PC-9 (cell line): ENCODE measurements at regions of chr21 and their contacts with region 1.

Region 1: DNA sequence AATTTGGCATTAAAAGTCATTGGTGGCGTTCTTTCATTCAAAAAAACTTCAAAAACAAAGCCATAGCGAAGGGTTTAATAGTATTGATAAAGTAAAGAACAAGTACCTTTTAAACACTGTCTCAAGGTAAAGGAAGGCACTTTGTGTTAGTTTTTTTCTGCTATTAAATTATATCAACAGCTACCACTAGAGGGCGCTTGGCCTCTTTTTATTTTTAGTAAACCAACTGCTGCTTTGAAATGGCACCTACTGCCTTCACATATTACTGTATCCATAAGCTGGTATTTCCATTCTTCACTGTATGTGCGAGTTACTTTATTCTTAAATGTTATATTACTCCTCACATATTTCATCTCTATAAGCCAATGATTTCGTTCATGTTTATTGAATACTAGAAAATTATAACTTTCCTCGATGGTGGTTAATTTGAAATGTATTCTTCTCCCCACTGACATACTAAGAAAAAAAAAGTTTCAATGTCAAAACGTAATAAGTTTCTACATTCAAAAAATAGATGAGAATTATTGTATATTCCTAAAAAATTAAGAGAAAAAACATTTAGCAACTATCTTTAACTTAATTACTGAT is 125.7 kb upstream of the CXADR start:
- DNase-seq: peak; percentile 17 to 47
- H3K4me3 ChIP-seq: no peak overlapping the region
- H3K27ac ChIP-seq: no peak overlapping the region
- H3K4me1 ChIP-seq: peaks cover 16% of the 10 kb centered on the region
- H3K27me3 ChIP-seq: no peaks in the 10 kb centered on the region
- CTCF ChIP-seq: peak; percentile 87

Region 2: GRCh38 chr21:16454399-16454798 is 932.7 kb before region 1 on chr21:
- CTCF ChIA-PET with region 1: no interaction called
- POLR2A ChIA-PET with region 1: no interaction called
- intact Hi-C with region 1: loop called (anchors 5 kb)
- DNase-seq: no peak
- H3K4me3 ChIP-seq: no peak overlapping the region
- H3K27ac ChIP-seq: no peak overlapping the region
- H3K4me1 ChIP-seq: no peaks in the 10 kb centered on the region
- H3K27me3 ChIP-seq: no peaks in the 10 kb centered on the region
- CTCF ChIP-seq: peak; percentile 52

Region 3: GRCh38 chr21:17461582-17461981 is 74.5 kb after region 1 on chr21:
- CTCF ChIA-PET with region 1: interaction called, 11 read pairs
- POLR2A ChIA-PET with region 1: no interaction called
- intact Hi-C with region 1: no loop called
- DNase-seq: no peak
- H3K4me3 ChIP-seq: no peak overlapping the region
- H3K27ac ChIP-seq: no peak overlapping the region
- H3K4me1 ChIP-seq: 0 out of 2 replicates have a peak, but pooled peaks cover 8% of the 10 kb centered on the region
- H3K27me3 ChIP-seq: no peaks in the 10 kb centered on the region
- CTCF ChIP-seq: no peak

Region 4: DNA sequence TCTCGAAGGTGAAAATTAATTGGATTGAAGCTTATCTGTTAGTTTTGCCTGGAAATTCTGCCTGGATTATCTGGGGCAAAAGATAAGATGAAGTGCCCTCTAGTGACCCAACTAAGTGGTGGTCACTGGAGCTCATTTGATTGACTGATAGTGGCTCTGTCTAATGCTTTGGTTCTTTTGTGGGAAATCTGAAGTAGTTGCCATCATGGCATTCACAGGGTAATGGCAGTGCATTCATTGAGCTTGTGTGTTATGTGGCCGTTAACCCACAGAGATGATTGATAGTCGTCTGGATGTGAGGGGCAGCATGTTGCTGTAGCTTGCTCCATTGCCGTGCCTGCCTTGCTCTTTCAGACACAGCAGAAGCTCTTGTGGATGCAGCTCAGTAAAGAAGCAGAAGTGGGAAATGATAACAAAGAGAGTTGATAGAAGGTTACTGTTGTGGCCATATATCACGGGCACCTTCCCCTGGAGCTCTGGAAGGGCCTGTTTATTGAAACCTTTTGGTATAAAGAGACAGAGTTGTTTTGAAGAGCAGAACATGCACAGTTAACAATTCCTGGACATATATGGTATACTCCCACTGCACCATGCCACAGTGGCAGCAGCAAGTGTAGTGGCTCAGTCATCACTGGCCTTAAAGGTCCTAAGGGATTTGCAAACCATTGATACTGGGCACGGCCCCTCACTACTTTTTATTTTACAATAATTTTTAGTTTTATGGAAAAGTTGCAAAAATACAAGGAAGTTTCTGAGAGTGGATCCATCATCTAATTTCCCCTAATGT is 167.7 kb after region 1 on chr21:
- CTCF ChIA-PET with region 1: interaction called, 16 read pairs
- POLR2A ChIA-PET with region 1: no interaction called
- intact Hi-C with region 1: loop called (anchors 1 kb)
- DNase-seq: no peak
- H3K4me3 ChIP-seq: no peak overlapping the region
- H3K27ac ChIP-seq: no peak overlapping the region
- H3K4me1 ChIP-seq: 0 out of 2 replicates have a peak, but pooled peaks cover 6% of the 10 kb centered on the region
- H3K27me3 ChIP-seq: no peaks in the 10 kb centered on the region
- CTCF ChIP-seq: peak; percentile 53; the same call in 1 of the 2 replicates

Region 5: GRCh38 chr21:17679002-17679600 is 292.0 kb after region 1 on chr21:
- CTCF ChIA-PET with region 1: no interaction called
- POLR2A ChIA-PET with region 1: no interaction called
- intact Hi-C with region 1: loop called (anchors 10 kb)
- DNase-seq: peak in 1 of 2 experiments; percentile 39
- H3K4me3 ChIP-seq: no peak overlapping the region
- H3K27ac ChIP-seq: no peak overlapping the region
- H3K4me1 ChIP-seq: no peaks in the 10 kb centered on the region
- H3K27me3 ChIP-seq: no peaks in the 10 kb centered on the region
- CTCF ChIP-seq: peak; percentile 87